ENCODE measurements at regions of chr12 and their contacts with region 1.

Region 1: GRCh38 chr12:103930034-103930786 is at the start of gene HSP90B1:
- DNase-seq: peak; percentile 99
- H3K4me3 Mint-ChIP-seq: peak within 1 kb of the TSS; percentile 86
- H3K27ac Mint-ChIP-seq: peak within 1 kb of the TSS; percentile 100
- H3K4me1 Mint-ChIP-seq: peaks cover 46% of the 10 kb centered on the region
- H3K27me3 Mint-ChIP-seq: no peaks in the 10 kb centered on the region
- total RNA-seq, gene HSP90B1: 615 and 617 TPM in 2 replicates

Region 2: DNA sequence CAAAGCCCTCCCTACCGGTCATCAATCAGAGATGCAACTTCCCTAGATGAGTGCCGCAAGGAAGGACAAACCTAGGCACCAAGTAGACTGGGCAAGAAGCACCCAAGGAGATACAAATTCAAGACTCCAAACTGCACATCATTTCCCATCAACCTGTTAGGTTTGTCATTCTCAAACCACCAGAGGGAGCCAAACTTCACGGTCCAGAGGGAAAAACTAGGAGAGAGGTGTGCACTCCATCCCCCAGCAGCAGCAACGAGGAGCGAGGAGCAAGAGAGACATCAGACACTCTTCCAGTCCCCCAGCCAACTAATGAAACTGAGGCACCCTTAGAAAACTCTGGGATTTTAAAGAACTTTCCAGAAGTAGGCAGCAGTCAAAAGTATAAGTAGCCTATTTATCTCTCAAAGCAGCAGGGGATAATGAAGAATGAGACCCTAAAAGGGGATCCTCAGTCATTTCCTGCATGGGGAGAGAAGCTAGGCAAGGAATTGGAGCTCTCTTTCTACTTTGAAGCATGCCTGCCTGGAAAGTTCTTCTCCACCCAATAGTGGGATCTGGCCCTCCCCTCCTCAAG is 52.2 kb before region 1 on chr12:
- intact Hi-C with region 1: loop called (anchors 1 kb)
- DNase-seq: peak; percentile 31
- H3K4me3 Mint-ChIP-seq: no peak overlapping the region
- H3K27ac Mint-ChIP-seq: no peak overlapping the region
- H3K4me1 Mint-ChIP-seq: peaks cover 30% of the 10 kb centered on the region
- H3K27me3 Mint-ChIP-seq: peaks cover 15% of the 10 kb centered on the region

Region 3: GRCh38 chr12:103956516-103957027 is 26.4 kb after region 1 on chr12:
- intact Hi-C with region 1: loop called (anchors 1 kb)
- DNase-seq: no peak
- H3K4me3 Mint-ChIP-seq: peak overlapping the region; percentile 96
- H3K27ac Mint-ChIP-seq: peak overlapping the region; percentile 97
- H3K4me1 Mint-ChIP-seq: peaks cover 40% of the 10 kb centered on the region
- H3K27me3 Mint-ChIP-seq: no peaks in the 10 kb centered on the region

Region 4: GRCh38 chr12:104049903-104050356 is 119.7 kb after region 1 on chr12 and contains the start of gene GLT8D2:
- intact Hi-C with region 1: no loop called
- DNase-seq: no peak
- H3K4me3 Mint-ChIP-seq: no peak within 1 kb of the TSS
- H3K27ac Mint-ChIP-seq: no peak within 1 kb of the TSS
- H3K4me1 Mint-ChIP-seq: peaks cover 5% of the 10 kb centered on the region
- H3K27me3 Mint-ChIP-seq: peaks cover 49% of the 10 kb centered on the region
- total RNA-seq, gene GLT8D2: 0.11 TPM in 1 of 2 replicates, not detected in the other

Region 5: DNA sequence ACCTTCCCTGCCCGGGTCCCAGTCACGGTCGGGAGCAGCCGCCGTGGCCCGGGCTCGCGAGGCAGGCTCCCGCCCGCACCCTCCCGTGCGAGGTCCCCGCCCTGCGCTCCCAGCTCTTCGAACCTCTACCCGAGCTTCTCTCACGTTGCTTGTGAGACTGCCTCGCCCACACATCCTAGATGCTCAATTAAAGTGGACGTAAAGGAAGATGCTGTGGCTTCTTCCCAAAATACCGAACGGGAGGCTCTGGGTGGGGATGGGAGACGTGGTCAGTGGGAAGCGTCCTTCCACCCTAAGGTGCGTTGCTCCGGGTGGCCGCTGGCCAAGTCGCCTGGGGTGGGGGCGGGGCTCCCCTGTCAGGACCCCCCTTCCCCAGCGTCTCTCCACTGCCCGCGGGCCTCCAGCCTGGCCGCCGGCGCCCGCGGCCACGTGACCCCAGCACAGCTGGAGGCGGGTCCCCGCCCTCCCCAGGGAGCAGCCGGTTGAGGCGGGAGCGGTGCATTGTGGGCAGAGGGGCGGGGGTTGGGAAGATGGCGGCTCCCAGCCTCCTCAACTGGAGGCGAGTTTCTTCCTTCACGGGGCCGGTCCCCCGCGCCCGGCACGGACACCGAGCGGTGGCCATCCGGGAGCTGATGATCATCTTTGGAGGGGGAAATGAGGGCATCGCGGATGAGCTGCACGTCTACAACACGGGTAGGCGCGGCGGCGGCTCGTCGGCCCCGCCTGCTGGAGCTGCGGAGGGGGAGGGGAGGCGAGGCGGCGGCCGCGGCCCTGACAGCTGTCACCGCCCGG is 134.0 kb after region 1 on chr12 and contains the start of gene HCFC2:
- intact Hi-C with region 1: loop called (anchors 1 kb)
- DNase-seq: peak; percentile 85
- H3K4me3 Mint-ChIP-seq: peak within 1 kb of the TSS; percentile 94
- H3K27ac Mint-ChIP-seq: peak within 1 kb of the TSS; percentile 80
- H3K4me1 Mint-ChIP-seq: peaks cover 27% of the 10 kb centered on the region
- H3K27me3 Mint-ChIP-seq: peaks cover 23% of the 10 kb centered on the region
- total RNA-seq, gene HCFC2: 8.7 and 9.1 TPM in 2 replicates

Region 6: DNA sequence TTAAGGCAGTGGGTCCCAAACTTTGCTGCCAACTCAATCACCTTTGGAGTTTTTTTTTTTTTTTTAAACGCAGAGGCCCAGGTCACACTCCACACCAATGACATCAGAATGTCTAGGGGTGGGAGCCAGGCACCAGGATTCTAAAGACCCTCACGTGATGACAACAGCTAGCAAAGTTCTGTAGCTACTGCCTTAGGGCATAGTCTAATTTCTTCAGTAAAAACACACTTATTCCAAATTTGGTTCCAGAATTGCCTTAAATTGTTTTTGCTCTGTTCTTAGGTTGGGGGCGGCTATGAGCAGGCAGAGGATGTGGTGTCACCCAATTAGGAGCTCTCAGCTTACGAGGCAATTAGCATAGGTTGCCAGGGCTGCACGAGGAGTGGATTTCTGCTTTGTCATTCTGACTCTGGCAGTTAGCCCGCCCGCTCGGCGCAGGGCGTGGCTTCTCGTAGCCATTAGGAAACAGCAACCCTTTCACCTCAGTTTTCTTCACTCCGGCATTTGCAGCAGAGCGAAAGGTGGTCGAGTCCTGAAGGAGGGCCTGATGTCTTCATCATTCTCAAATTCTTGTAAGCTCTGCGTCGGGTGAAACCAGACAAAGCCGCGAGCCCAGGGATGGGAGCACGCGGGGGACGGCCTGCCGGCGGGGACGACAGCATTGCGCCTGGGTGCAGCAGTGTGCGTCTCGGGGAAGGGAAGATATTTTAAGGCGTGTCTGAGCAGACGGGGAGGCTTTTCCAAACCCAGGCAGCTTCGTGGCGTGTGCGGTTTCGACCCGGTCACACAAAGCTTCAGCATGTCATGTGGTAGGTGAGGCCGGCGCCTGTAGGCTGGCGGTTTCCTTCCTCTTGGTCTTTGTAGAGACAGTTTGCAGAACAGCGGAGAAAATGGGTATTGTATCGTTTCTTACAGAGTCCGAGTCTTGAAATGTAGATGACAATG is 356.6 kb after region 1 on chr12:
- intact Hi-C with region 1: loop called (anchors 2 kb)
- DNase-seq: peak; percentile 92
- H3K4me3 Mint-ChIP-seq: peak overlapping the region; percentile 100
- H3K27ac Mint-ChIP-seq: peak overlapping the region; percentile 100
- H3K4me1 Mint-ChIP-seq: peaks cover 24% of the 10 kb centered on the region
- H3K27me3 Mint-ChIP-seq: no peaks in the 10 kb centered on the region

Region 7: GRCh38 chr12:104456417-104456949 is 526.3 kb after region 1 on chr12 and contains the start of gene CHST11:
- intact Hi-C with region 1: loop called (anchors 5 kb)
- DNase-seq: peak; percentile 74
- H3K4me3 Mint-ChIP-seq: peak within 1 kb of the TSS; percentile 98
- H3K27ac Mint-ChIP-seq: peak within 1 kb of the TSS; percentile 96
- H3K4me1 Mint-ChIP-seq: peaks cover 31% of the 10 kb centered on the region
- H3K27me3 Mint-ChIP-seq: no peaks in the 10 kb centered on the region
- total RNA-seq, gene CHST11: 41.0 and 50.6 TPM in 2 replicates

Measured in activated T-helper 2 cell treated with anti-CD3 and anti-CD28 coated beads, Interferon-gamma antibody, Interleukin-2, Interleukin-4, amounts not matched to agents 10 μg/mL and 5 μg/mL and 100 μg/mL, durations not matched to agents 14 hours and 24 hours and 36 hours (primary cell).